AG04450 (cell line): ENCODE measurements at regions of chr14 and their contacts with region 1.

Region 1: DNA sequence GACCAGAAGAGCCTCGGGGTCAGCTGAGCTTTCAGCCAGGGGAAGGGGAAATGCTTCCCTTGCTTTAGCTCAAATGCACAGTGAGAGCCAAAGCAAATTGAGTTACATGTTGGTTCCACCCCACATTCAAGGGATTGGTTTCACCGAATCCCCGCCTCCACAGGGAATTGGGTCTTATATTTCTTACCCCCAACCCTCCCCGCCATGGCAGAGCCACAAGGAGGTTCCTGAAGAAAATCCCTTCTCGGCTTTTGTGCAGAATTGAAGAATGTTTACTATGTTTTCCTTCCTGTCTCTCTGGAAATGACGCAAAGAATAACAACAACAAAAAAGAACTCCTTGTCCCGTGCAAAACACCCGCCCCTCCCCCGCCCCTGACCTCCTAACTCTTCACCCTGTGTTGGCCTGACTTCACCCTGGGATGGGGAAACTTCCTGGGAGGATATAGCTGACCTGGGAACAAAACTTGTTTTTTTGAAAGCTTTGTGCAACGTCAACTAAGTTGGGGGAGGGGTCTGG is 21.9 kb upstream of the CIPC start:
- DNase-seq: no peak
- H3K4me3 ChIP-seq: no peak overlapping the region
- H3K27ac ChIP-seq: no peak overlapping the region
- H3K27me3 ChIP-seq: no peaks in the 10 kb centered on the region
- CTCF ChIP-seq: no peak

Region 2: GRCh38 chr14:77023001-77023996 is 52.9 kb before region 1 on chr14:
- CTCF ChIA-PET with region 1: interaction called, 19 read pairs
- POLR2A ChIA-PET with region 1: no interaction called
- DNase-seq: no peak
- H3K4me3 ChIP-seq: peak overlapping the region; percentile 94
- H3K27ac ChIP-seq: peak overlapping the region; percentile 39
- H3K27me3 ChIP-seq: no peaks in the 10 kb centered on the region
- CTCF ChIP-seq: peak; percentile 53

Region 3: DNA sequence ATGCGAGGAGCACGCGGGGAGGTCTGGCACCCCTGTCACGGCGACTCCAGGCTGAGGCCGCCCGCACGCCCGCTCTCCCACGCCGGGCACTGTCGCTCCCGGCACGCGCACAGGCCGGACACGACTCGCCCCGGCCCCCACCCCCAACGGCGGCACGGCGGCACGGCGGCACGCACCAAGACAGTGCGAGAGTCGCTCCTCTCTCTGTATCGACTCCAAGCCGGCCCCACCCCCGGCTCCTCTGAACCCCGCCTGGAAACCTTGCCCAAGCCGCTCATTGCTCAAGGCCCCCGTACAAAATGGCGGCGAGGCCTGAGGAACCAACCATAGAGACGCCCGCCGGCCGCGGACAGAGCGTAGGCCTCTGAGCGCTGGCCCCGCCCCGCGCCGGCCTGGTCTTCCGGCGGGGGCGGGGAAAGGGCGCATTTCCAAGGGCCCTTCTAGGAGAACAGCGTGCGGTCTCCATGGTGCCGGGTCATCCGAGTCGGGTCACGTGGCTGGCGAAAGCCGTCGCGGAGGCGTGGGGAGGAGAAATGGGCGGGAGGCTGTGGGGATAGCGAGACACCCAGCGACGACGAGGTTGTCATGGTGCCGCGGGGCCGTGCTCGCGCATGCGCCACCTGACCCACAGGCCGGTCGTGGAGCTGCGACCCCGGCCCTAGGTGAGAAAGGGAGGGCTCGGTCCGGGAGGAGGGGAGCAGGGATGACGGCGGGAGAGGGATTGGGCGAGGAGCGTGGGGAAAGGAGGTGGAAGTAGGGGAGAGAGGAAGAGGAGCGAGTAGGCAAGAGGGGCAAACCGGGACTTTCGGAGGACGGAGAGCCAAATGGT is 21.7 kb after region 1 on chr14 and contains the start of gene CIPC:
- CTCF ChIA-PET with region 1: interaction called, 98 read pairs
- POLR2A ChIA-PET with region 1: no interaction called
- DNase-seq: peak; percentile 96
- H3K4me3 ChIP-seq: peak within 1 kb of the TSS; percentile 99
- H3K27ac ChIP-seq: peak within 1 kb of the TSS; percentile 73
- H3K27me3 ChIP-seq: no peaks in the 10 kb centered on the region
- CTCF ChIP-seq: no peak
- polyA plus RNA-seq, gene CIPC: 8.9 and 9.9 TPM in 2 replicates

Region 4: GRCh38 chr14:77339407-77339806 is 263.2 kb after region 1 on chr14:
- CTCF ChIA-PET with region 1: no interaction called
- POLR2A ChIA-PET with region 1: no interaction called
- DNase-seq: peak; percentile 34
- H3K4me3 ChIP-seq: no peak overlapping the region
- H3K27ac ChIP-seq: no peak overlapping the region
- H3K27me3 ChIP-seq: no peaks in the 10 kb centered on the region
- CTCF ChIP-seq: no peak